Heart right ventricle (tissue), 16 donors: ENCODE measurements at regions of chr2 and their contacts with region 1.

Region 1: DNA sequence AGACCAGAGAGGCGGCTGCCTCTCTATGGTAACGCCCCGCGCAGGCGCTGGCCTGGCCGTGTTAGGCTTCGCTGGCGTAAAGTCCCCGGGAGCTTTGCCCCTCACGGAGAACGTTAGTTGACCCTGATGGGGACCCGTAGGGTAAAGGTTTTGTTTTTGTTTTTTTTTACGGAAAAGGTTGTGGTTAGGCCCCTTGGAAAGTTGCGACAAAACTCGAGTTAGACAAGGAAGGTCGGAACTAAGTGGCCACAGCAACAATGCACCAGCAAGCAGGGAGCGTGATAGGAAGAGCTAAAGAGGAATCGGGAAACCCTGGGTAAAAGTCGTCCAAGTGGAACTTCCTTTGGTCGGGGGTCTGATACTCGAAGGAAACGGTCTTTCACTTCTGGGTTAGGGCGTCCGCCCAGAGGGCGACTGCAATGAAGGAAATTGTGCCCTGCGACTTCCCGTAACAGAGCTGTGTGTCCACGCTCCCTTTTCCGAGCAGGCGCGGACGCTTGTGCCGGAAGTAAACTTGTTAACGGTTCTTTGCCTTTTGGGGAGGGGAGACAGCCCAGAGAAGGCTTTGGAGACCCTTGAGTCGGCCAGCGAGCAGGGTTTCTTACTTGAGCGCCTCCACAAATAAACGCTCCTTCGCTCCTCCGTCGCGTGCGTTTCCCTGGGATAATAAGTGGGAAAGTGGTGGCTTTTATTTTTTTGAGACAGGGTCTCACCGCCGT is 493 bp upstream of the CLASP1 start:
- DNase-seq: peak; percentile 95 to 97
- ATAC-seq: peak; percentile 98 to 99 (median 98)
- H3K4me3 ChIP-seq: peak overlapping the region; percentile 62 to 96 (median 90)
- H3K27ac ChIP-seq: peak overlapping the region; percentile 86 to 100 (median 96)
- H3K4me1 ChIP-seq: peaks cover 8 to 68% (median 55%) of the 10 kb centered on the region in 9 donors
- H3K27me3 ChIP-seq: no peaks in the 10 kb centered on the region
- CTCF ChIP-seq: no peak

Region 2: DNA sequence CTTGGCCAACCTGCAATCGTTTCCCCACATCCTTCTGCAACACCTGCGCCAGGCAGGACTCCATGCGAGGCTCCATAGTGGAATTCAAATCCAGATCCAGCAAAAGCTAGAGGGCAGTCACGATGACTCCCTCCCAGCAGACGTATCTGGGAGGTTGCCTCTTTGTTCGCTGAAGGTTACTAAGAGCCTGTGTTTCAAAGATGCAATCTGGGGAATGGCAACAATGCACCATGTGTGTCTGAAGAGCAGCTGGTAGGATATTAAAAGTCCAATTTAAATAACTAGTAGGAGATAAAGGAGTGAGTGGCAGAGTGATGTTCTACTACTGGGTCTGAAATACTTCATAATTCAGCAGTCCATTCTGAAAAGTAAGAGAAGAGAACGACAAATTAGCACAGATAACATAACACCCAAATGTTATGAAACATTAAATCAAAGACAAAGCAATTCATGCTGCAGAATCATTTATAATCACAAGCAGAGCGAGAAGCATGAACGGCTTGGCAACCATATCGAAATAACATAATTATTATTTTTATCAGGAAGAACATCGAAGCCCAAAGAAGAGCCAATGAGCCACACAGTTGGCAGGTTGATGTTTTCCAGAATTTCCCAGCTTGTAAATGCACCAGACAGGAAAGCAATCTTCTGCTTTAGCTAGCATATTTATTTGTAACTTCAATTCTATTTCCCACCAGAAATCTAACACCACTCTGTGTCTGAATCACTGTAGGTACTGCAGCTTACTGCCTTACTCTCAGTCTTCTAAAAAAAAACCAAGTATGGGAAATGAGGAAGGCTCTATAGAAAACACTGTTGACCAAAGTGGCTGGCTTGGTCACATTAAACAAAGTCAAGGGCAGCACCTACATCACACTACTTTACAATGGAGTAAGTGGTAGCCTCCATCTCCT is 43.7 kb before region 1 on chr2:
- intact Hi-C with region 1: loop called in 2 of 10 experiments (anchors 5 kb)
- DNase-seq: no peak
- ATAC-seq: peak in 7 of 8 donors; percentile 23 to 82 (median 48)
- H3K4me3 ChIP-seq: no peak overlapping the region
- H3K27ac ChIP-seq: peak overlapping the region in 8 of 10 donors; percentile 26 to 77 (median 44)
- H3K4me1 ChIP-seq: peaks cover 9 to 71% (median 30%) of the 10 kb centered on the region in 9 donors
- H3K27me3 ChIP-seq: no peaks in the 10 kb centered on the region
- CTCF ChIP-seq: peak in 2 of 9 donors; percentile 15 to 29

Region 3: GRCh38 chr2:121611730-121612705 is 37.7 kb before region 1 on chr2:
- intact Hi-C with region 1: loop called in 2 of 10 experiments (anchors 5 kb)
- DNase-seq: no peak
- ATAC-seq: no peak
- H3K4me3 ChIP-seq: no peak overlapping the region
- H3K27ac ChIP-seq: peak overlapping the region in 7 of 10 donors; percentile 2 to 64 (median 21)
- H3K4me1 ChIP-seq: peaks cover 5 to 71% (median 48%) of the 10 kb centered on the region in 9 donors
- H3K27me3 ChIP-seq: no peaks in the 10 kb centered on the region
- CTCF ChIP-seq: no peak

Region 4: DNA sequence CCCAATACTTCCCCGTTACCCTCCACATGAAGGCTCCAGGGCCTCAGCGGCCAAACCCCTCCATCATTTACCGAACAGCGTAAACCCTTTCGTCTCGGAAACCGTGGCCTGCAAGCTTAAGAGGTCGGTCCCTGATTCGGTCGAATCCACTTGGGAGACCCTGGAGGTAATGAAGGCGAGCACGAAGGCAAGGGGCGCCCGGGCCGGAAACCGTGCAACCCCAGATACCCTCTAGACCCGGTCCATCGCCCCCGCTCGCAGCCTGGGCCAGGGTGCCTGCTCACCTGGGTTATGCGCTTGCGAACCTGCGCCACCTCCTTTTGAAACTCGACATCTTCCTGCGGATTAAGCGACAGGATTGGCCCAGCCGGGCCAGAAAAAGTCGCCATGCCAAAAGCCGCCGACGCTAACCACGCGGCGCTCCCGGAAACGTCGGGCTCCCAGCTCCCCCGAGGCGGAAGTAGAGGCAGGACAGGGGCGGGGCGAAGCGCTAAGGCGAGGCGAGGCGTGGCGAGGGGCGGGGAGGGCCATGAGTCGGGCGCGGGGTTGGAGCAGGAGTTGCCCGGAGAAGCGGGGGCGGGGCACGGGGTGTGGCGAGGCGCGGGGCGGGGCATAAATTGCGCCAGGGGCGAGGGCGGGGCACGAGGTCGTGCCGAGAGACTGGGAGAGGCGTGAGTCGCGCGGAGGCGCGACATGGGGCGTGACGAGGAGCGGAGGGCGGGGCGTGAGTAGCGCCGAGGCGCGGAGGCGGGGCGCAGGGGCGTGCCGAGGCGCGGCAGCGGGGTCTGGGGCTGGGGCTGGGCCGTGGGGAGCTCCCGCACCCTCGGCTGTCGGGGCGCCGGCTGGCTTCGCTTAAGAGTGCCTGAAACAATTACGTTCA is 86.9 kb after region 1 on chr2 and contains the start of gene NIFK:
- intact Hi-C with region 1: no loop called
- DNase-seq: peak; percentile 99 to 100
- ATAC-seq: peak; percentile 97 to 99 (median 99)
- H3K4me3 ChIP-seq: peak within 1 kb of the TSS; percentile 68 to 99 (median 75)
- H3K27ac ChIP-seq: peak within 1 kb of the TSS; percentile 30 to 93 (median 80)
- H3K4me1 ChIP-seq: peaks cover 0 to 21% (median 15%) of the 10 kb centered on the region in 9 donors
- H3K27me3 ChIP-seq: no peaks in the 10 kb centered on the region
- CTCF ChIP-seq: peak in 1 of 9 donors; percentile 10
- total RNA-seq, gene NIFK: 20.8 to 29.7 (median 24.7) TPM

Region 5: GRCh38 chr2:121755236-121756111 is 105.7 kb after region 1 on chr2 and contains the start of gene TSN:
- intact Hi-C with region 1: no loop called
- DNase-seq: peak; percentile 97 to 98
- ATAC-seq: peak; percentile 99 to 100 (median 100)
- H3K4me3 ChIP-seq: peak within 1 kb of the TSS; percentile 79 to 95 (median 90)
- H3K27ac ChIP-seq: peak within 1 kb of the TSS; percentile 28 to 86 (median 79)
- H3K4me1 ChIP-seq: peaks cover 5 to 32% (median 28%) of the 10 kb centered on the region in 9 donors
- H3K27me3 ChIP-seq: no peaks in the 10 kb centered on the region
- CTCF ChIP-seq: no peak
- total RNA-seq, gene TSN: 32.5 to 54.4 (median 48.7) TPM

Region 6: GRCh38 chr2:121768143-121768755 is 118.5 kb after region 1 on chr2:
- intact Hi-C with region 1: no loop called
- DNase-seq: no peak
- ATAC-seq: no peak
- H3K4me3 ChIP-seq: no peak overlapping the region
- H3K27ac ChIP-seq: no peak overlapping the region
- H3K4me1 ChIP-seq: peaks cover 0 to 4% (median 0%) of the 10 kb centered on the region in 9 donors
- H3K27me3 ChIP-seq: no peaks in the 10 kb centered on the region
- CTCF ChIP-seq: no peak